CD8-positive, alpha-beta T cell (primary cell): ENCODE measurements at regions of chr6 and their contacts with region 1.

Region 1: DNA sequence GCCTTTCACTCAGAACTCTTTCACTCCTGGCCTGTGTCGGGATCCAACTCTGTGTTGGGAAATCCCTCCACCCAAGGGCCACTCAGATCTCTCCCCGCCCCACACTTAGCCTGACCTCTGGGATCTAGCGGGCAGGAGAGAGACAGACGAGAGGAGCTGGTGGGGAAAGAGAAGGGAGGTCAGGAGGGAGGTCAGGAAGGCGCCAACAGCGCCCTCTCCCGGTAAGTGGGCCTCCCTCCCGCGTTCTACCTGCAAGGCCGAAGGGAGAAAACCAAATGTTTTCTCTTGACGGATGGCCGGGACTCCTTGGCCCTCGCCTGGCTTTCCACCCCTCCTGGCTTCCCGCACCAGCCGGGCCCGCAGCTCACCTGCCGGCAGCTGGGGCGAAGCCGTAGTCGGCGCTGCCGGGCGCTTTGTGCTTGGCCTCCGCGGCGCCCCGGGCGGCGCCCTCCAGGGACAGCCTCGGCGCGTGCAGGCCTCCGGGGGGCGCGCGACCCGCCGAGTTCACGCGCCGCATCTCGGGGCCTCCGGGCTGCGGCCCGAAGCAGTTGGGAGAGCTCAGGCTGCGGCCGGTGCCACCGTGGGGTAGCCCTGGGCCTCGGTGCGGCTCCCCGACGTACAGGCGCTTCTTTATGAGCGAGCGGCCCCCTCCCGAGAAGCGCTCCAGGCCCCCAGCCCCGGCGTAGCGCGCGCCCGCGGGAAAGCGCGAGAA is 38.2 kb downstream of the C6orf132 start:
- DNase-seq: peak; percentile 38 to 86 (median 72)
- ATAC-seq: peak; percentile 89
- H3K4me3 ChIP-seq: peak overlapping the region; percentile 45 to 69
- H3K4me3 Mint-ChIP-seq: peak overlapping the region; percentile 72
- H3K27ac ChIP-seq: peak overlapping the region; percentile 11 to 38
- H3K27ac Mint-ChIP-seq: peak overlapping the region; percentile 62
- H3K4me1 ChIP-seq: peaks cover 8% of the 10 kb centered on the region
- H3K4me1 Mint-ChIP-seq: peaks cover 7% of the 10 kb centered on the region
- H3K27me3 ChIP-seq: no peaks in the 10 kb centered on the region
- H3K27me3 Mint-ChIP-seq: no peaks in the 10 kb centered on the region
- CTCF ChIP-seq: peak; percentile 98

Region 2: GRCh38 chr6:40536442-40536841 is 1567.8 kb before region 1 on chr6:
- CTCF ChIA-PET with region 1: no interaction called
- POLR2A ChIA-PET with region 1: no interaction called
- intact Hi-C with region 1: no loop called
- DNase-seq: no peak
- ATAC-seq: no peak
- H3K4me3 ChIP-seq: no peak overlapping the region
- H3K4me3 Mint-ChIP-seq: no peak overlapping the region
- H3K27ac ChIP-seq: no peak overlapping the region
- H3K27ac Mint-ChIP-seq: no peak overlapping the region
- H3K4me1 ChIP-seq: no peaks in the 10 kb centered on the region
- H3K4me1 Mint-ChIP-seq: no peaks in the 10 kb centered on the region
- H3K27me3 ChIP-seq: no peaks in the 10 kb centered on the region
- H3K27me3 Mint-ChIP-seq: peaks cover 8% of the 10 kb centered on the region
- CTCF ChIP-seq: no peak

Region 3: DNA sequence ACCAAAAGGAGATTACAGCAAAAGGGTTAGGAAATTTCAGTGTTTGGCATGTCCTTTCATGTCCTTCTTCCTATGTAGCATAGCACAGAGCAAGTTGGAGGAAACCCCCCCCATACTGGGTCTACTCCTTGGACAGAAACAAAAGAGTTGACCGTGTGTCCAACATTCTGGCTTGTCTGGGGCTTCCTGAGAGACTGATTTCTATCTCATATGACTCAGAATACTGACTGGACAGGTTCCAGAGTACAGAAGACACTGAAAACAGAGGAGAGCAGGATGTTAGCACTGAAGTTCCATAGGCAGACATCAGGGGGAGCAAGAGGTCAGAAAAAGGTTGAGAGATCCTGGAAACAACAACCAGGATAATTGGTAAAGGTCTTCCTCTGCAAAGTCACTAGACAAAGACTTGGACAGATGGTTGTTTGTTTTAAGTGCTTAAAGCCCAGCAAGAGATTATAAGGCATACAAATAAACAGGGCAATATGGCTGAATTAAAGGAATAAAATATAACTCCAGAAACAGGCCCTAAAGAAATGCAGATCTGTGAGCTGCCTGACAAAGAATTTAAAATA is 257.5 kb before region 1 on chr6:
- CTCF ChIA-PET with region 1: interaction called, 10 read pairs
- POLR2A ChIA-PET with region 1: no interaction called
- intact Hi-C with region 1: loop called in 1 of 2 experiments (anchors 1 kb)
- DNase-seq: peak; percentile 16 to 74 (median 53)
- ATAC-seq: peak; percentile 81
- H3K4me3 ChIP-seq: no peak overlapping the region
- H3K4me3 Mint-ChIP-seq: no peak overlapping the region
- H3K27ac ChIP-seq: no peak overlapping the region
- H3K27ac Mint-ChIP-seq: no peak overlapping the region
- H3K4me1 ChIP-seq: no peaks in the 10 kb centered on the region
- H3K4me1 Mint-ChIP-seq: peaks cover 3% of the 10 kb centered on the region
- H3K27me3 ChIP-seq: no peaks in the 10 kb centered on the region
- H3K27me3 Mint-ChIP-seq: no peaks in the 10 kb centered on the region
- CTCF ChIP-seq: peak; percentile 77

Region 4: GRCh38 chr6:41901882-41902519 is 202.2 kb before region 1 on chr6:
- CTCF ChIA-PET with region 1: interaction called, 4 read pairs
- POLR2A ChIA-PET with region 1: no interaction called
- intact Hi-C with region 1: loop called in 1 of 2 experiments (anchors 2 kb)
- DNase-seq: peak; percentile 25 to 81 (median 59)
- ATAC-seq: peak; percentile 71
- H3K4me3 ChIP-seq: no peak overlapping the region
- H3K4me3 Mint-ChIP-seq: no peak overlapping the region
- H3K27ac ChIP-seq: no peak overlapping the region
- H3K27ac Mint-ChIP-seq: no peak overlapping the region
- H3K4me1 ChIP-seq: peaks cover 11% of the 10 kb centered on the region
- H3K4me1 Mint-ChIP-seq: peaks cover 19% of the 10 kb centered on the region
- H3K27me3 ChIP-seq: no peaks in the 10 kb centered on the region
- H3K27me3 Mint-ChIP-seq: no peaks in the 10 kb centered on the region
- CTCF ChIP-seq: peak; percentile 42

Region 5: GRCh38 chr6:42075159-42075838 is 29.0 kb before region 1 on chr6:
- CTCF ChIA-PET with region 1: interaction called, 11 read pairs
- POLR2A ChIA-PET with region 1: no interaction called
- intact Hi-C with region 1: no loop called
- DNase-seq: peak; percentile 6 to 64 (median 47)
- ATAC-seq: no peak
- H3K4me3 ChIP-seq: no peak overlapping the region
- H3K4me3 Mint-ChIP-seq: no peak overlapping the region
- H3K27ac ChIP-seq: no peak overlapping the region
- H3K27ac Mint-ChIP-seq: peak overlapping the region; percentile 18
- H3K4me1 ChIP-seq: no peaks in the 10 kb centered on the region
- H3K4me1 Mint-ChIP-seq: peaks cover 5% of the 10 kb centered on the region
- H3K27me3 ChIP-seq: no peaks in the 10 kb centered on the region
- H3K27me3 Mint-ChIP-seq: no peaks in the 10 kb centered on the region
- CTCF ChIP-seq: peak; percentile 49

Region 6: DNA sequence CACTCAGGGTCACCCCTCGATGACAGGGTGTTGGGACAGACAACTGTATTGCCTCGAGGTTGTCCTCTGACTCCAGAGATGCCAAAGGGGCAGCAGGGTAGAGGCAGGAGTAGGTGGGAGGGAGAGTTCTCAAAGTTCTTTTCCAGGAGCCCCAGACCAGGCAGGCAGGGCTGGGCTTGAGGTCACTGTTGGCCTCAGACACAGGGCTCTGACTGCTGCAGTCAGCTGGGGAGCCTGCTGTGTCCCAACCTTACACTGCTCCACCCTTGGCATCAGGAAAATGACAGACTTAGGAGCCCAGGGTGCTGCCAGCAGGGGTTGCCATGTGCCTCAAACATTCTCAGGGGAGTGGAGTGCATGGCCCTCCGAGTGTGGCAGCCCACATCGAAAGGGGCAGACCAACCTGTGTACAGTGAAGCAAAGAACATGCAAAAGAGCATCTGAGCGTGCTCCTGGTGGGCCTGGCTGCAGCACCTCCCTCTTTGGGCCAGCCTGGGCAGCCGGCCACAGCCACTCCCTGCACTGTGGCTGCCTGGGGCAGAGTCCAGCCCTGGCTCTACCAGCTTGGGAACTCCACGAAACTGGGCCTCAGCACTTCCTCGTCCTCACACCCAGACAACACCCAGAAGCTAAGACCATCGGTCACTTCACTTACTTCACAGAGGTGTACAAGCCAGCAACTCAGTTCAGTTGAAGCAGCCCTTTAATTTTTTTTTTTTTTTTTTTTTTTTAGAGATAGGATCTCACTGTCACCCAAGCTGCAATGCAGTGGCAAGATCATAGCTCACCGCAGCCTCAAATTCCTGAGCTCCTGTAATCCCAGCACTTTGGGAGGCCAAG is 14.1 kb after region 1 on chr6:
- CTCF ChIA-PET with region 1: interaction called, 23 read pairs
- POLR2A ChIA-PET with region 1: interaction called, 4 read pairs
- intact Hi-C with region 1: no loop called
- DNase-seq: no peak
- ATAC-seq: no peak
- H3K4me3 ChIP-seq: no peak overlapping the region
- H3K4me3 Mint-ChIP-seq: no peak overlapping the region
- H3K27ac ChIP-seq: no peak overlapping the region
- H3K27ac Mint-ChIP-seq: no peak overlapping the region
- H3K4me1 ChIP-seq: no peaks in the 10 kb centered on the region
- H3K4me1 Mint-ChIP-seq: no peaks in the 10 kb centered on the region
- H3K27me3 ChIP-seq: no peaks in the 10 kb centered on the region
- H3K27me3 Mint-ChIP-seq: peaks cover 6% of the 10 kb centered on the region
- CTCF ChIP-seq: no peak

Region 7: GRCh38 chr6:43113431-43114260 is 1009.4 kb after region 1 on chr6:
- CTCF ChIA-PET with region 1: no interaction called
- POLR2A ChIA-PET with region 1: no interaction called
- intact Hi-C with region 1: no loop called
- DNase-seq: no peak
- ATAC-seq: no peak
- H3K4me3 ChIP-seq: no peak overlapping the region
- H3K4me3 Mint-ChIP-seq: no peak overlapping the region
- H3K27ac ChIP-seq: no peak overlapping the region
- H3K27ac Mint-ChIP-seq: no peak overlapping the region
- H3K4me1 ChIP-seq: no peaks in the 10 kb centered on the region
- H3K4me1 Mint-ChIP-seq: no peaks in the 10 kb centered on the region
- H3K27me3 ChIP-seq: no peaks in the 10 kb centered on the region
- H3K27me3 Mint-ChIP-seq: no peaks in the 10 kb centered on the region
- CTCF ChIP-seq: no peak